Activated CD8-positive, alpha-beta memory T cell treated with anti-CD3 and anti-CD28 coated beads, Interleukin-2, amount 10 ng/mL, durations not matched to agents 7 days and 5 days (primary cell): ENCODE measurements at regions of chr12 and their contacts with region 1.

Region 1: GRCh38 chr12:6778574-6779550 is 6.5 kb downstream of the LAG3 start:
- DNase-seq: peak; percentile 94
- ATAC-seq: peak; percentile 70
- H3K4me3 Mint-ChIP-seq: peak overlapping the region; percentile 52
- H3K27ac Mint-ChIP-seq: peak overlapping the region; percentile 80
- H3K4me1 Mint-ChIP-seq: peaks cover 60% of the 10 kb centered on the region
- H3K27me3 Mint-ChIP-seq: no peaks in the 10 kb centered on the region

Region 2: DNA sequence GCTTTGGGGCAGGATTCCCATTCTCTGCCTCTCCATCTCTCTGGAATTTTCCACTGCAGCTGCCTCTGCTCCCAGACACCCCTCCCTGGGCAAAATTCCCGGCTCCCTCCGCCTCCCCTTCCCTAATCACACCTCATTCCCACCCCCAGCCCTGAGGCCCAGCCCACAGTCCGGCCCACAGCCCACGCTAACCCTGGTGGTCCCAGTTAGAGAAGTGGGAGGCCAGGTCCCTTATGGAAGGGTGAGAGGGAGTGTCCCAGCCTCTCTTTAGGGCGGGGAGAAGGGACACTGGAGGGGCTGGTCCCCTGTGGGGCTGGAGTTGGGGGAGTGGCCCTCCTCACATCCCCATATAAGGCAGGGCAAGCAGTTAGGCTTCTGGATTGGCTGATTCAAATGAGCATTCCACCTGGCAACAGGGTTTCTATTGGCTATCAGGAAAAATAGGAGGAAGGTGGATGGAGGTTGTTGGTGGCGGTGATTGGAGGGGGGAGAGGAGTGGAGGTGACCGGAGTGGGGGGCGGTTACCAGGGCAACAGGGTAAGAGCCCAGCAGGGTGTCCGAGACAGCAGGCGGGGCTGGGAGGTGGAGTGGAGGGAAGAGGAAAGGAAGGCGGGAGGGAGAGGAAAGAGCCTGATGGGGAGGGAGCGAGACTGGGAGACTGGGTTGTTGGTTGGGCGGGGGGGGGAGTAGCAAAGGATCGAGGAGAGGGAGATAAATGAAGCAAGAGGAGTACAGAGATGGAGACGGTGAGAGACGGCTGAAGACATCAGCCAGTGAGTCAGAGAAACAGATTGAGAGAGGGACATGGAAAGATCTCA is 14.6 kb before region 1 on chr12:
- CTCF ChIA-PET with region 1: interaction called, 108 read pairs
- DNase-seq: peak; percentile 87
- ATAC-seq: peak; percentile 82
- H3K4me3 Mint-ChIP-seq: peak overlapping the region; percentile 62
- H3K27ac Mint-ChIP-seq: peak overlapping the region; percentile 39
- H3K4me1 Mint-ChIP-seq: peaks cover 40% of the 10 kb centered on the region
- H3K27me3 Mint-ChIP-seq: peaks cover 30% of the 10 kb centered on the region

Region 3: DNA sequence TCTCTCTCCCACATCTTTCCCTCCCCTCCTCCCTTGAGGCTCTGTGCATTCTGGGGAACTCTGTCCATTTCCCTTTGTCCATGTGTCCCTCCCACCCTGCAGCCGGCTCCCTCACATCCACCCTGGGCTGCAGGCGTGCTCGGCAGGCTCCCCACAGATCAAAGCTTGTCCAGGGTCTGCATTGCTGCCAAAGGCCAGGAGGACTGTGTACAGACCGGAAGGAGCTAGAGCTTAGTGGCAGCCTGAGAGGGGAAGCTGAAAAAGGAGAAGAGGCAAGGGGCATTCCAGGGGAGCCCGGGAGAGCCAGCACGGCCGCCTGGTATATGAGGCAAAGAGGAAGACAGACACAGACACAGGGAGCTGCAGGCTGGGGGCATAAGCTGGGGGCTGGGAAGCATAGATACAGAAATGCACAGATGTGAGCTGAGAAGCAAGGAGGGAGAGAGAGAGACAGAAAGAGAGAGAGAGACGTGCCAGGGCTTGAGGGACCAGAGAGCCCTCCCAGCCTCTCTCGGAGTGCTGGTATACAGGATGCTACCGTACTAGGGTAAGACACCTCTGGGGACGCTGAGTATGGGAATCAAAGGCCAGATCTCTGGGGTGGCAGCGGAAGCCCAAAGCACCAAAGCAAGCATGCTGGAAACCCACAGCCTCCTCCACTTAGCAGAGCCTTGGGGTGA is 13.8 kb after region 1 on chr12:
- CTCF ChIA-PET with region 1: interaction called, 10 read pairs
- DNase-seq: no peak
- ATAC-seq: peak; percentile 43
- H3K4me3 Mint-ChIP-seq: no peak overlapping the region
- H3K27ac Mint-ChIP-seq: no peak overlapping the region
- H3K4me1 Mint-ChIP-seq: peaks cover 23% of the 10 kb centered on the region
- H3K27me3 Mint-ChIP-seq: peaks cover 29% of the 10 kb centered on the region

Region 4: DNA sequence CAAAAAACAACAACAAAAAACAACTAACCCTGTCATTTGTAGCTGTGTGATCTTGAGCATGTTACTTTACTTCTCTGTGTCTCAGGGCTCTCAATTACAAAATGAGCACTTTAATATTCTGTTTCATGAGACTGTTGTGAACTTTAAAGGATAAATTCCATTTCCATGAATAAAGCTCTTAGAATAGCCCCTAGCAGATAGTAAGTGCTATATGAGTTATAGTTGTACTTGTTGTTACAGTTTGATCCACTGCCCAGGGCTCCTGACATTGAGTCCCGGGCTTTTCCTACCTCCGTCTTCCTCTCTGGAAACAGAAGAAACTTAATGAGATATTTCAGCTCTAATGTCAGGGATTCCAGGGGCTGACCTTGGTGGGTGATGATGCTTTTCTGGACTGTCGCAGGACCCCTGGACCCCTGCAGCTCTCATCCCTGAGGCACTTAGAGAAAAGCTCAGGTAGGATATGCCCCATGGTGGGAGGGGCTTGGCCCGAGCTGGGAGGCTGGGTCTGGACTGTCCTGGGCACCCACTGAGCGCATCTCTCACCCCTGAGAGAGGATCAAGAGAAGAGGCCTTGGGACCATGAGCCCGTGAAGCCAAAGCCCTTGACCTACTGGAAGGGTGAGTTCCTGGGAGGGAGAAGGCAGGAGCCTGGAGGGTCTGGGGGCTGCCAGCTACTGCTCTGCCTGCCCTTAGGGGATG is 54.5 kb after region 1 on chr12:
- CTCF ChIA-PET with region 1: interaction called, 54 read pairs
- DNase-seq: no peak
- ATAC-seq: no peak
- H3K4me3 Mint-ChIP-seq: no peak overlapping the region
- H3K27ac Mint-ChIP-seq: no peak overlapping the region
- H3K4me1 Mint-ChIP-seq: peaks cover 12% of the 10 kb centered on the region
- H3K27me3 Mint-ChIP-seq: peaks cover 34% of the 10 kb centered on the region

Region 5: GRCh38 chr12:6863586-6864321 is 84.9 kb after region 1 on chr12:
- CTCF ChIA-PET with region 1: no interaction called
- DNase-seq: no peak
- ATAC-seq: no peak
- H3K4me3 Mint-ChIP-seq: no peak overlapping the region
- H3K27ac Mint-ChIP-seq: no peak overlapping the region
- H3K4me1 Mint-ChIP-seq: peaks cover 11% of the 10 kb centered on the region
- H3K27me3 Mint-ChIP-seq: no peaks in the 10 kb centered on the region